Activated B cell treated with CpG ODN at 0.5 μM for 24 hours (primary cell): ENCODE measurements at regions of chr4 and their contacts with region 1.

Region 1: GRCh38 chr4:80489798-80490197 is 154.3 kb downstream of the CFAP299 start:
- DNase-seq: no peak
- ATAC-seq: no peak
- H3K4me3 Mint-ChIP-seq: peak overlapping the region; percentile 17
- H3K27ac Mint-ChIP-seq: no peak overlapping the region
- H3K4me1 Mint-ChIP-seq: peaks cover 37% of the 10 kb centered on the region
- H3K27me3 Mint-ChIP-seq: no peaks in the 10 kb centered on the region
- CTCF ChIP-seq: no peak

Region 2: DNA sequence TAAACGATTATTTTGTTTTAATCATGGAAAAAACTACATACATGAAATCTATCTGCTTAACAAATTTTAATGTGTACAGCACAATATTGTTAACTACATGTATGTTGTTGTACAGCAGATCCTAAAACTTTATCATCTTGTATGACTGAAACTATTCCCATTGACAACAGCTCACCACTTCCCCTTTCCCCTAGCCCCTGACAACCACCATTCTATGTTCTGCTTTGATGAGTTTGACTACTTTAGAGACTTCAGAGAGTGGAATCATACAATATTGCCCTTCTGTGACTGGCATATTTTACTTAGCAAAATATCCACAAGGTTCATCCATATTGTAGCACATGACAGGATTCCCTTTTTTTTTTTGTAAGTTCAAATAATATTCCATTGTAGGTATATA is 31.6 kb after region 1 on chr4:
- CTCF ChIA-PET with region 1: no interaction called
- POLR2A ChIA-PET with region 1: no interaction called
- intact Hi-C with region 1: loop called (anchors 5 kb)
- DNase-seq: no peak
- ATAC-seq: peak; percentile 68
- H3K4me3 Mint-ChIP-seq: no peak overlapping the region
- H3K27ac Mint-ChIP-seq: no peak overlapping the region
- H3K4me1 Mint-ChIP-seq: peaks cover 9% of the 10 kb centered on the region
- H3K27me3 Mint-ChIP-seq: no peaks in the 10 kb centered on the region
- CTCF ChIP-seq: no peak